ENCODE measurements at regions of chr1 and their contacts with region 1.

Region 1: DNA sequence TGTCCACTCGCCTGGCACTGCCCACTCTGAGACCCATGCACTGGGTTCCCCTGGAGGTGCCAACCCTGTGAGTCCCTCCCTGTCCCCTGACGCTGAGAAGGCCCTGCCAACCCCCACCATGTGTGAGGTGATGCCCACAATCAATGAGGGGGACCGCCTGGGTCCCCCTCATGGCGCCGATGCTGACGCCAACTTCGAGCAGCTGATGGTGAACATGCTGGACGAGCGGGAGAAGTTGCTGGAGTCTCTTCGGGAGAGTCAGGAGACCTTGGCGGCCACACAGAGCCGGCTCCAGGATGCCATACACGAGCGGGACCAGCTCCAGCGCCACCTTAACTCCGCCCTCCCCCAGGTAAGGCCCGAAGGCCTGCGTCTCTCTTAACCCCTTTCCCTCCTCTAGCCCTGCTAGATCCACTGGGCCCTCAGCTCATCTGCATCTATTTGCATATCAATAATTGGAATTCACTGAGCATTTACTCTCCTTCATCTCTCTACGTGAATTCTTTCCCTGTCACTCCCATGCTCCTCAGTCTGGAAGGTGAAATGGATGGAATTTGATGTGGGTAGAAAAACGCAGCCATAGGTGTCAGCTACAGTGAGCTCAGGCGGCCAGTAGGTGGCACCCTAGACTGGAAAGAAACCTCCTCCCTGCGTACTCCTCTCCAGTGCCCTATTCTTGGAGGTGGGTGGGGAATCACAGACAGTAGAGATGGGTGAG is 12.8 kb downstream of the PPFIA4 start:
- DNase-seq: peak; percentile 61
- H3K4me3 ChIP-seq: no peak overlapping the region
- H3K27ac ChIP-seq: no peak overlapping the region
- H3K4me1 ChIP-seq: peaks cover 25% of the 10 kb centered on the region
- H3K27me3 ChIP-seq: no peaks in the 10 kb centered on the region
- CTCF ChIP-seq: peak; percentile 92 to 96

Region 2: DNA sequence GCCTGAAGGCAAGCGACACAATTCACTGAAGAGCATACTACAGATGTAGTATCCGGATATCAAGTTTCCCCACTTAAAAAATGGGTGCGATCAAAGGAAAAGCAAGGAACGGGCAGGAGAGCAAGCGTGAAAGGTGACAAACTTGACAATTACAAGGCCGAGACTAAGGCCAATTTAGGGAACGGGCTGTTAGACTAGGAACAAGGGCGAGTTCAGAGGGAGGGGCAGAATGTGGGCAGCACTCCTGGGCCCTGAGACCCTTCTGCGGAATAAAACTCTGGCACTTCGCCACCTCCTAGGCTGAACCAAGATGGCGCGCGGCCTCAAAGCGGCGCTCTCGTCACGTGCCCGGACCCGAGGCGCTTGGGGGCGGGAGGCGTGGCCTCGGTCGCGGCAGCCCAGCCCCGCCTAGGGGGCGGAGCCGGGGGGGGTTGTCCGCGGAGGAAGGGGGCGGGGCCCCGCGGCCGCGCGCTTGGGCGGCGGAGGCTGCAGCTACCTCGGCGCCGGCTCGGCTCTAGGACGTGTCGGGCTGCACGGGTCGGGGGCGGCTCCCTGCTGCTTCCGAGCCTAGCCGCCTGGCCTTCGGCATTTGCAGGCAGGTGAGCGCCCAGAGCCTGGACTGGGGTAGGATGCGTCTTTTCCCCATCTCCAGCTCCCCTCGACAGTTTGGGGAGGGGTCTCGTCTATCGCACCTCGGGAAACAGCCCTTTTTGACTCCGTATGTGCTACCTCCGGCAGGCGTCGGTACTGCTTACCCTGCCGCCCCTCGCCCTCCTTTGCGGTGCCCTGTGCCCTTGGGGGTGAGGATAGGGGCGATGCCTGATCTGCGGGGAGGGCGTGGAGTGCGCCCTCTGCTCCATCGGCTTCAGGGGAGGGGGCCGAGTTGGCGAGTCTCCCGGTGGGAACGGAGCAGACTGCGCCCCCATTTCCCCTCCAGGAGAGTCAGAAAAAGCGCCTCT is 12.7 kb before region 1 on chr1 and contains the start of gene PPFIA4:
- CTCF ChIA-PET with region 1: interaction called, 14 read pairs
- dilution Hi-C with region 1: no loop called
- in situ Hi-C with region 1: no loop called
- intact Hi-C with region 1: no loop called
- DNase-seq: peak; percentile 83
- H3K4me3 ChIP-seq: peak within 1 kb of the TSS; percentile 56 to 95 (median 89)
- H3K27ac ChIP-seq: peak within 1 kb of the TSS; percentile 12
- H3K4me1 ChIP-seq: peaks cover 8% of the 10 kb centered on the region
- H3K27me3 ChIP-seq: no peaks in the 10 kb centered on the region
- CTCF ChIP-seq: no peak
- total RNA-seq, gene PPFIA4: 8.2 to 8.3 TPM

Region 3: GRCh38 chr1:203084588-203085502 is 45.8 kb after region 1 on chr1:
- CTCF ChIA-PET with region 1: no interaction called
- dilution Hi-C with region 1: no loop called
- in situ Hi-C with region 1: no loop called
- intact Hi-C with region 1: loop called (anchors 5 kb)
- DNase-seq: no peak
- H3K4me3 ChIP-seq: no peak overlapping the region
- H3K27ac ChIP-seq: no peak overlapping the region
- H3K4me1 ChIP-seq: peaks cover 11% of the 10 kb centered on the region
- H3K27me3 ChIP-seq: no peaks in the 10 kb centered on the region
- CTCF ChIP-seq: peak; percentile 49 to 66

Region 4: DNA sequence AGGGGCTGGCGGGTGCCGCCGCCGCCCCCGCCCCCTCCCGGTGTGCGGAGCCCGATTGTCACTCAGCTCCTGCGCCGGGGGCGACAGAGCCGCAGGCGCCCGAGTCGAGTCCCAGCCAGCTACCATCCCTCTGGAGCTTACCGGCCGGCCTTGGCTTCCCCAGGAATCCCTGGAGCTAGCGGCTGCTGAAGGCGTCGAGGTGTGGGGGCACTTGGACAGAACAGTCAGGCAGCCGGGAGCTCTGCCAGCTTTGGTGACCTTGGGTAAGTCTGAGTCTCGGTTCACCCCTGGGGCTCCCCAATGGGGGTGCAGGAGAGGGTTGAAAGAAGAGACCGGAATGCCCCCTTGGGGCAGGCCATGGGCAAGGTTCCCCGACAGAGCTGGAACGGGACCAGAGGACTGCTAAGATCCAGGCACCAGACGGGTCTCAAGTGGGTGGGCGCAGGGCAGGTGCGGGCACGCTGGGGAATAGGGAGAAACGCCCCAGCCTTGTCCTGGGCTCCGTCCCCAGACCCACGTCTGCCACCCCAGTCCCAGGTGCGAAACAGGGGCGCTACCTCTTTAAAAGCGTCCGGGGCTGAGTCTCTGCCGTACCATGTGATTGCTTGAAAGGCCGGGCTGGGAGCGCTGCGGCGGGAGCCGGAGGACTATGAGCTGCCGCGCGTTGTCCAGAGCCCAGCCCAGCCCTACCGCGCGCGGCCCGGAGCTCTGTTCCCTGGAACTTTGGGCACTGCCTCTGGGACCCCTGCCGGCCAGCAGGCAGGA is 88.8 kb after region 1 on chr1 and contains the start of gene ADORA1:
- CTCF ChIA-PET with region 1: interaction called, 10 read pairs
- dilution Hi-C with region 1: loop called (anchors 5 kb)
- in situ Hi-C with region 1: no loop called
- intact Hi-C with region 1: loop called (anchors 1 kb)
- DNase-seq: peak; percentile 47
- H3K4me3 ChIP-seq: peak within 1 kb of the TSS; percentile 32 to 58 (median 41)
- H3K27ac ChIP-seq: no peak within 1 kb of the TSS
- H3K4me1 ChIP-seq: peaks cover 13% of the 10 kb centered on the region
- H3K27me3 ChIP-seq: no peaks in the 10 kb centered on the region
- CTCF ChIP-seq: peak in 1 of 2 donors; percentile 11
- total RNA-seq, gene ADORA1: 0.96 to 1.7 TPM

Region 5: DNA sequence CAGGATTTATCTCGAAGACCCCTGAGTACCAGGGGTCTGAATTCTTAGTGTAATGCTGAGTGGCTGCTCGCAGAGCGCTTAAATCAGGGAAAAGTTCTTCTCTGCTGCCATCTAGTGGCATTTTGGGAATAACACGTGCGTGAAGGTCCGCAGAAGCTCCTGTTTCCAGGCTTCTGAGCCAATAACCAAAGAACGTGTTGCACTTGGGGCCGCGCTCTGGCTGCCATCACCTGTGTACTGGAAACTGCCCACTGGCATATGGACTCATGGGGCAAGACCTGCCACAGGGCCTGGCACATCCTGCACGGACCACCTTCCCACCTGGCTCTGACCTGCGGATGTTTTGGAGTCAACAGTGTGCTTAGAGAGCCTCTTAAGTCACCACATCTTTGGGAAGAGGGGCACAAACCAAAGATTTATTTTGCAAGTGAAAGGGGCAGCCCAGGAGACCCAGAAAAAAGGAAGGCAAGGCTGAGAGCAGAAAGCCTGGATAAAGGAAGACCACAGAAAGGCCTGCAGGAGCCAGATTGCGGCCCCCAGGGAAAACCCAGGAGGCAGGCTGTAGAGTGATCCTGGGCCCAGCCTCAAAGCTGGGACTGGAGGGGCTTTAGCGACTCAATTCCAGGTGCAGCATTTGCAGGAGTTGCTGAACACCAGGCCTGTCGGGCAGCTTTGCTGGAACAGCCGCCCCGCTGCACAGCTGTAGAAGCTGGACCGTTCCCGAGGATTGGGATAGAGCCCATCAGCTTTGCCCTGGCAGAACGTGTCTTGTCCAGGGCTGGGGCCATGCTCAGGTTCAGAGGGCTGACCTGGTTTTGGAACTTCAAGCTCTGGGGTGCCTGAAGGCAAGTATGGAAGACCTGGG is 177.5 kb after region 1 on chr1:
- CTCF ChIA-PET with region 1: interaction called, 23 read pairs
- dilution Hi-C with region 1: loop called (anchors 10 kb)
- in situ Hi-C with region 1: loop called (anchors 10 to 25 kb)
- intact Hi-C with region 1: loop called (anchors 1 kb)
- DNase-seq: peak; percentile 24
- H3K4me3 ChIP-seq: no peak overlapping the region
- H3K27ac ChIP-seq: no peak overlapping the region
- H3K4me1 ChIP-seq: no peaks in the 10 kb centered on the region
- H3K27me3 ChIP-seq: no peaks in the 10 kb centered on the region
- CTCF ChIP-seq: peak; percentile 64 to 66

Region 6: GRCh38 chr1:203609979-203610493 is 571.0 kb after region 1 on chr1:
- CTCF ChIA-PET with region 1: no interaction called
- dilution Hi-C with region 1: no loop called
- in situ Hi-C with region 1: no loop called
- intact Hi-C with region 1: no loop called
- DNase-seq: no peak
- H3K4me3 ChIP-seq: no peak overlapping the region
- H3K27ac ChIP-seq: no peak overlapping the region
- H3K4me1 ChIP-seq: peaks cover 11% of the 10 kb centered on the region
- H3K27me3 ChIP-seq: no peaks in the 10 kb centered on the region
- CTCF ChIP-seq: no peak

Measured in mammary epithelial cell (primary cell).